PC-9 (cell line): ENCODE measurements at regions of chr19 and their contacts with region 1.

Region 1: GRCh38 chr19:48696353-48697010 is 711 bp downstream of the FUT2 start:
- DNase-seq: peak in 1 of 2 experiments; percentile 27
- H3K4me3 ChIP-seq: peak overlapping the region; percentile 47
- H3K27ac ChIP-seq: no peak overlapping the region
- H3K4me1 ChIP-seq: peaks cover 24% of the 10 kb centered on the region
- H3K27me3 ChIP-seq: no peaks in the 10 kb centered on the region
- CTCF ChIP-seq: no peak

Region 2: GRCh38 chr19:48433337-48433736 is 263.1 kb before region 1 on chr19:
- CTCF ChIA-PET with region 1: no interaction called
- POLR2A ChIA-PET with region 1: no interaction called
- intact Hi-C with region 1: no loop called
- DNase-seq: no peak
- H3K4me3 ChIP-seq: no peak overlapping the region
- H3K27ac ChIP-seq: no peak overlapping the region
- H3K4me1 ChIP-seq: no peaks in the 10 kb centered on the region
- H3K27me3 ChIP-seq: no peaks in the 10 kb centered on the region
- CTCF ChIP-seq: no peak

Region 3: GRCh38 chr19:48501496-48502350 is 194.8 kb before region 1 on chr19:
- CTCF ChIA-PET with region 1: no interaction called
- POLR2A ChIA-PET with region 1: no interaction called
- intact Hi-C with region 1: no loop called
- DNase-seq: peak; percentile 96 to 99
- H3K4me3 ChIP-seq: peak overlapping the region; percentile 95
- H3K27ac ChIP-seq: peak overlapping the region; percentile 65
- H3K4me1 ChIP-seq: peaks cover 16% of the 10 kb centered on the region; the same call in 1 of the 2 replicates
- H3K27me3 ChIP-seq: no peaks in the 10 kb centered on the region
- CTCF ChIP-seq: no peak

Region 4: DNA sequence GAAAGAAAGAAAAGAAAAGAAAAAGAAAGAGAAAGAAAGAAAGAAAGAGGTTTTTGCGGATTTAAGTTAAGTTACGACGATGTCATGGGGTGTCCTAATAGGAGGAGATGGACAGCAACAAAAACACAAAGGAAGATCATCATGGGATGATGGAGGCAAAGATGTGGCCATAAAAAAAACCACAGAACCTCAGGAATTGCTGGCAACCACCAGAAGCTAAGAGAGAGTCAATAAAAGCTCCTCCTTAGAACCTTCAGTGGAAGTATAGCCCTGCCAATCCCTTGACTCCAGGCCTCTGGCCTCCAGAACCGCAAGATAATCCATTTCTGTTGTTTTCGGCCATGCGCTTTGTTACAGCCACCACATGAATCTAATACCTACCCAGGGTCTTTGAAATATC is 160.4 kb after region 1 on chr19:
- CTCF ChIA-PET with region 1: no interaction called
- POLR2A ChIA-PET with region 1: no interaction called
- intact Hi-C with region 1: no loop called
- DNase-seq: no peak
- H3K4me3 ChIP-seq: no peak overlapping the region
- H3K27ac ChIP-seq: no peak overlapping the region
- H3K4me1 ChIP-seq: 0 out of 2 replicates have a peak, but pooled peaks cover 4% of the 10 kb centered on the region
- H3K27me3 ChIP-seq: no peaks in the 10 kb centered on the region
- CTCF ChIP-seq: no peak

Region 5: GRCh38 chr19:48899781-48900476 is 203.4 kb after region 1 on chr19 and contains the start of gene NUCB1:
- CTCF ChIA-PET with region 1: interaction called, 11 read pairs
- POLR2A ChIA-PET with region 1: no interaction called
- intact Hi-C with region 1: no loop called
- DNase-seq: peak; percentile 97 to 98
- H3K4me3 ChIP-seq: peak within 1 kb of the TSS; percentile 98
- H3K27ac ChIP-seq: peak within 1 kb of the TSS; percentile 67
- H3K4me1 ChIP-seq: peaks cover 15% of the 10 kb centered on the region
- H3K27me3 ChIP-seq: no peaks in the 10 kb centered on the region
- CTCF ChIP-seq: no peak
- total RNA-seq, gene NUCB1: 185 and 216 TPM in 2 replicates